Aorta (tissue), 5 donors: ENCODE measurements at regions of chr16 and their contacts with region 1.

Region 1: GRCh38 chr16:87033541-87034300 is 283.5 kb downstream of the C16orf95 start:
- DNase-seq: peak in 1 of 2 donors; percentile 55
- ATAC-seq: no peak
- H3K4me3 ChIP-seq: no peak overlapping the region
- H3K27ac ChIP-seq: peak overlapping the region; percentile 65 to 91
- H3K4me1 ChIP-seq: peaks cover 0 to 3% of the 10 kb centered on the region in 2 donors
- H3K27me3 ChIP-seq: no peaks in the 10 kb centered on the region

Region 2: GRCh38 chr16:86975445-86975844 is 58.3 kb before region 1 on chr16:
- intact Hi-C with region 1: loop called in 1 of 2 experiments (anchors 5 kb)
- DNase-seq: peak; percentile 75 to 82
- ATAC-seq: peak; percentile 63
- H3K4me3 ChIP-seq: no peak overlapping the region
- H3K27ac ChIP-seq: no peak overlapping the region
- H3K4me1 ChIP-seq: no peaks in the 10 kb centered on the region
- H3K27me3 ChIP-seq: no peaks in the 10 kb centered on the region